MCF 10A (cell line): ENCODE measurements at regions of chr17 and their contacts with region 1.

Region 1: DNA sequence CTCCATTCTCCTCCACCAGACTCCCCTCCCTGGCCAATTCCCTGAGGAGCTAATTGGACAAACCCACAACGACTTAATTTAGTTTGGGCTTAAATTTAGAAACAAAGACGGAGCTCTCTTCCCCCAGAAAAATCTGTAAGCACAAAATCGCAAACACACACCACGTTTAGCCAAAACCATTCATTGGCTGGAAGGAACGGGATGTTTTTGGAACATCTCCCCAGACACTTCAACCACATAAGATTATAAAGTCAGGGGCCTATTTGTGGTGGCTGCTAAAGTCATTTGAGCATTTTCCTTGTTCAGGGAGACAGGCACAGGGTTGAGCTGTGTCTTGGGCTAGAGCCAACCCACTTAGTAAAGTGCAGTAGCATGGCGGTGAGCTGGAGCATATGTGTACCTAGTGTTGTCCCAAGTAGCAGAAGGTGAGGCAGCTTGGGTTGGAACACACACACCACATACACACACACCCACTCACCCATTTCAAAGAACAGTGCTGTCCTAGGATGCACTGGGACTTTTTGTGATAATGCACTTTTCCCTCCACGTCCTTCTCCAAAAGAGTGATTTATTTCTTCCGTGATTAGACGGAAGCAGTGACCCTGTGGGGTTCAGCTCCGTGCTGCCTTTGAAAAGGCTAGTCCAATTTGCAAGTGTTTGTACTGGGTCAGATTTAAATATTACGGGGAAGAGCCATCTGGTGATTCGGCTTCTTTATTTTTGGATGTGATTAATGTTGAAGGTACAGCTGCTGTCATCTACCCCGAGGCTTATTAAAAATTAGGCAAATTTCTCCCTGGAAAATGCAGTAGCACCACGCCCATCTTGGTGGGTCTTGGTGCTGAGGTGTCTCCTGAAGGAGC is 32.2 kb downstream of the ELAC2 start:
- DNase-seq: no peak
- H3K4me3 Mint-ChIP-seq: no peak overlapping the region
- H3K27ac Mint-ChIP-seq: no peak overlapping the region
- H3K4me1 Mint-ChIP-seq: peaks cover 10% of the 10 kb centered on the region
- H3K27me3 Mint-ChIP-seq: no peaks in the 10 kb centered on the region
- CTCF ChIP-seq: no peak

Region 2: DNA sequence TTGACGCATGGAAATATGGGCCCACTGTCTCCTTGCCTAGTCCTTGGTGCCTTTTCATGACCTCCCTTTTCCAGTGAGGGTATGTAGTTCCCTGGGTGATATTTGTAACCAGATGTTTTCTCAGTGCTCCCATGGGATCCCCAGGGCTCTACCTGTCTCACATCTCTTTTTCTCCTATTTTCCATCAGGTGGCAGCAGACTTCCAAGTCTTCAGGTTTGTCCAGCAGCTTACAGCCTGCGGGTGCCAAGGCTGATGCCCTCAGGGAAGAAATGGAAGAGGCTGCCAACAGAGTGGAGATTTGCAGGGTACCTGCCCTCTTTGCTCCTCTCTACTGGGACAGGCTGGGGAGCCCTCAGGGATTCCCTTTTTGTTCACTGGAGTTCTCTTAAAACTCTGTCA is 56.9 kb before region 1 on chr17:
- CTCF ChIA-PET with region 1: interaction called, 5 read pairs
- POLR2A ChIA-PET with region 1: no interaction called
- intact Hi-C with region 1: loop called (anchors 5 kb)
- DNase-seq: peak; percentile 32
- H3K4me3 Mint-ChIP-seq: no peak overlapping the region
- H3K27ac Mint-ChIP-seq: no peak overlapping the region
- H3K4me1 Mint-ChIP-seq: peaks cover 5% of the 10 kb centered on the region
- H3K27me3 Mint-ChIP-seq: peaks cover 35% of the 10 kb centered on the region
- CTCF ChIP-seq: peak; percentile 16

Region 3: GRCh38 chr17:13244513-13244912 is 258.9 kb after region 1 on chr17:
- CTCF ChIA-PET with region 1: no interaction called
- POLR2A ChIA-PET with region 1: no interaction called
- intact Hi-C with region 1: no loop called
- DNase-seq: peak; percentile 35
- H3K4me3 Mint-ChIP-seq: no peak overlapping the region
- H3K27ac Mint-ChIP-seq: no peak overlapping the region
- H3K4me1 Mint-ChIP-seq: no peaks in the 10 kb centered on the region
- H3K27me3 Mint-ChIP-seq: peaks cover 76% of the 10 kb centered on the region
- CTCF ChIP-seq: no peak

Region 4: GRCh38 chr17:13584701-13585080 is 599.0 kb after region 1 on chr17:
- CTCF ChIA-PET with region 1: no interaction called
- POLR2A ChIA-PET with region 1: no interaction called
- intact Hi-C with region 1: no loop called
- DNase-seq: no peak
- H3K4me3 Mint-ChIP-seq: no peak overlapping the region
- H3K27ac Mint-ChIP-seq: peak overlapping the region; percentile 84
- H3K4me1 Mint-ChIP-seq: peaks cover 40% of the 10 kb centered on the region
- H3K27me3 Mint-ChIP-seq: no peaks in the 10 kb centered on the region
- CTCF ChIP-seq: no peak